ENCODE measurements at regions of chr2 and their contacts with region 1.

Region 1: DNA sequence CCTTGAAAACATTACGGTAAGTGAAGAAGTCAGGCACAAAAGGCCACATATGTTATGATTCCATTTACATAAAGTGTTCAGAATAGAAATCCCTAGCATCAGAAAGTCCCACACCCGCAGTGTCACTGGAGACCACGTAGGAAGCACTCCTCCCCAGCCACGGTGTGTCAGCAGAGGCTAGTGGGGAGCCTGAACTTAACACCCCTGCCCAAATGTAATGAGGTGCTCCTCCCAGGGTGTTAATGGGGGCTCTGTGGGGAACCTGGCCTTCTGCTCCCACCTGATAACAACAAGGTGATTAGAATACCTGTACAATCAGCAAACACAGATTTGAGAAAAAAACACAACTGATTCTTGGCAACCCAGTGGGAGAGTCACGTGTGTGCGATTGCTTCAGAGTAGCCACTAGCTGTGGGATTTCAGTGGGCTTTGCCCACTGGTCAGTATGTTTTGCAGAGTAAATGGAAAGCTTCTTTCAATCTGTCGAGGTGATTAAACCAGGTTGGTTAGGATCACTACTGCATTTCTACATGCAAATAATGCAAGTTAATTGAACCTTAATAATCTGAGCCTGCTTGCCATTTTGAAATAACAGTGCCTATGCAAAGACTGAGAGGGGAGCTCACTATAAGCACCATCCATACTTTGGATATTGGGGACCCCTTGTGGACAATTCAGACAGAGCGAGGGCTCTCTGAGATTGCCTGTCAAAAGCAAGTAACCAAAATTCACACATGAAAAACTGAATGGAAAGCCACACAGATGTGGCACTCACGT is 20.6 kb upstream of the ATRAID start:
- DNase-seq: peak in 6 of 10 donors; percentile 17 to 87 (median 37)

Region 2: DNA sequence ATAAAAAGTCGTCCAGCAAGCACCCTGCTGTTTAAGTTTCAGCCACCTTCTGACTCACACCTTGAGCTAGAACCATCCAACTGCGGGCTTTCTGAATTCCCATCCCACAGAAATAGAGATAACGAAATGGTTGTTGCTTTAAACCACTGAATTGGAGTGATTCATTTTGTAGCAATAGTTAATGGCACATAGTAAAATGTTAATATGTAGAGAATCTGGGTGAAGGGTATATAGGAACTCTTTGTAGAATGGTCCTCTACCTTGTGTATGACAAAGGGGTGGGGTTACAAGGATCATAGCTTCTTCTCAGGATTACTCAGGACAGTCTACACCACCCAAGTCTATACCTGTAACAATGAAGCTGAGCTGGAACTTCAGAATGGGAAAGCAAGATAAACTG is 223.2 kb before region 1 on chr2:
- intact Hi-C with region 1: loop called (anchors 10 kb)
- DNase-seq: no peak

Region 3: GRCh38 chr2:27353762-27354596 is 162.7 kb after region 1 on chr2:
- intact Hi-C with region 1: no loop called
- DNase-seq: no peak